Endothelial cell of umbilical vein (primary cell): ENCODE measurements at regions of chr3 and their contacts with region 1.

Region 1: DNA sequence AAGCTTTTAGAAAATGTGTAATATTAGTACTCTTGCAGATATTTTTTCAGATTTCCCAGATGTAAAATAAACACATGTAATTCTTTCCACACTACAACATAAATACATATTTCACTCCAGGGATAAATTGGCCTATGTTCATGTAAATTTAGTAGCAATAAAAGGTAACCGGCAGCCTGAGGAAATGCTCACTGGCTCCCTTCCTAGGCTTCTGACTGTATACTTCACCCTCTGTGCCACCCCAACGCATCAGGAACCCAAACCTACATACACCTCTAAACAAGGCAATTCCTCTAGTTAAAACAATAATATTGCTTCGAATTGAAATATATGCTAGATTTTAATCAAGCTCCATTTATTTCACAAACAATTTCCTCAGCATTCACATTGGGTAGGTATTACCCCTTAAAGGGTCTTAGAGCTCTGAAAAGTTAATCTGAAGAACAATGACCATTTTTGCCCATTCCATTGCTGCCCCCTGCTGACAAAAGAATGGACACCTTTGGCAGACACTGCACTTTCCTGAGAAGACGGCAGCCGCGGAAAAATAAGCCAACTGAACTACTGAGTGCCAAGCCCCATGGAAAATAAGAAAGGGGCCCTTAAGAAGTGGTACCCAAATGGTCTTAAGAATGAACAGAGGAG is 212.5 kb downstream of the OSBPL10 start:
- DNase-seq: peak; percentile 76
- H3K4me3 ChIP-seq: no peak overlapping the region
- H3K27ac ChIP-seq: no peak overlapping the region
- H3K4me1 ChIP-seq: no peaks in the 10 kb centered on the region
- H3K27me3 ChIP-seq: no peaks in the 10 kb centered on the region
- CTCF ChIP-seq: peak; percentile 43 to 58
- POLR2A ChIP-seq: no peak

Region 2: DNA sequence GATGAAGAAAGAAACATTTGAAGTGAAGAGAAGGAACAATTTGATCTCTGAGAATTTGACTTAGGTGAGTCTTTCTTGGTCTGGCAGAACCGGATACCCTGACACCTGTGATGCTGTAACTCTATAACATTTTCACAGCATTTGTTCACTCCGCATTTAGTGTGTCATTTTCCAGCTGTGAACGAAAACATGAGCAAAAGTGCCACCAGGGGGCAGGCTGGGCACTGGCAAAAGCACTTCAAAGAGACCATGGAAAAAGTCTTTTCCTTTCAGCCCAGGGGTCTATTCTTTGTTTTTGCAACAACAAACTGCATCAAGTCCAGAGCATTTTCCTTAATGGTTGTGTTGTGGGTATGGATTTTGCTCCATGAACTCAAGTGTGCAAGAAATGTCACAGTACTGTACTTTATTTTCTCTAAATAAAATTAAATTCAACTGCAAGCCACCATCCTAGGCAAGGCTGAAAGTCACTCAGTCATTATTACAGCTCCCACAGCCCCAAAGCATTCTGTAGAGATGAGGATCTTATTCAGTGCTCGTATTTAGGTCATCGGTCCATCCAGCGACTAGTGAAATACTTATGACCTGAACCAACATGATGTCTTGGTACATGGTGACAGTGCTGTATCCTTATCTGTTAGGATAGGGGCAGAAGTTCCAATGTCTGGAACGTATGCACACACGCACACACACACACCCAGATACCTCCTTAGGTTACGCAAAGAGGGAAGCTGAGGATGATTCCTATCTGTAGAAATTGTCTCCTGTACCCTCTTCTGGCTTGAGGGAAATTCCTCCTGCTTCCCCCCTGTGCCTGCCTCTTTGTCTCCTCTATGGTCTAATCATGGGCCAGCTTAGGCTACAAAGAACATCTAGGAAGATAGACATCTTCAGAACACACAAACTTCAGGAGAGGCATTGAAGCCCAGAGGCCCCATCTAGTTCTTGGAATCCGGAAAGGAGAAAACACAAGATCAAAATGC is 999.6 kb before region 1 on chr3:
- CTCF ChIA-PET with region 1: interaction called, 6 read pairs
- POLR2A ChIA-PET with region 1: no interaction called
- dilution Hi-C with region 1: no loop called
- intact Hi-C with region 1: loop called (anchors 5 kb)
- DNase-seq: peak; percentile 70
- H3K4me3 ChIP-seq: no peak overlapping the region
- H3K27ac ChIP-seq: no peak overlapping the region
- H3K4me1 ChIP-seq: no peaks in the 10 kb centered on the region
- H3K27me3 ChIP-seq: peaks cover 0 to 3% of the 10 kb centered on the region in 2 experiments
- CTCF ChIP-seq: peak; percentile 80 to 85
- POLR2A ChIP-seq: no peak

Region 3: GRCh38 chr3:31550452-31551251 is 217.9 kb before region 1 on chr3:
- CTCF ChIA-PET with region 1: interaction called, 21 read pairs
- POLR2A ChIA-PET with region 1: no interaction called
- dilution Hi-C with region 1: no loop called
- intact Hi-C with region 1: loop called (anchors 1 kb)
- DNase-seq: peak; percentile 60
- H3K4me3 ChIP-seq: no peak overlapping the region
- H3K27ac ChIP-seq: no peak overlapping the region
- H3K4me1 ChIP-seq: no peaks in the 10 kb centered on the region
- H3K27me3 ChIP-seq: no peaks in the 10 kb centered on the region
- CTCF ChIP-seq: peak; percentile 42 to 57
- POLR2A ChIP-seq: no peak

Region 4: DNA sequence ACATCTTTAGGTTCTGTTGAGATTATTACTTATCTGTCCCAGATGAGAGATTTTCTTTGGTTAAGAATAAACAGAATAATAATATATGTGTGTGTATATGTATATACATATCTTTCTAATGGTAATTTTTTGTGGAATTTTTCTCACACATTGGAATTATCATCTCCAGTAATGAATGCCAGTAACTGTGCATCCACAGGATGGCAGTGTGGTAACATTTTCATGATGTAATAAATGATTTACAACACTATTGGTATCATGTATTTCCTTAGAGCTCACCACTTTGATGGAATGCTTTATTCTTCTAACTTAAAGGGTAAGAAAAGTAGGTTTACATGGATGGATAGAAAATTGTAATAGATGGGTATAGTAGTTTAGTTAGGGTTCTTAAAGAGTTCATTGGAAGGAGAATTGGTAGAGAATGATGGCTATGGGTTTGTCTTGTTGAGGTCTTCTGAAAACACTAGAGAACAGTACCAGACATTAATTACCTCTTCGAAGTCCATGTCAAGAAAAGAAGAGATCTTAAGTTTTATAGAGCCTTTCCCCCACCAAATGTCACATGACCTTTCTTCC is 157.8 kb before region 1 on chr3:
- CTCF ChIA-PET with region 1: interaction called, 37 read pairs
- POLR2A ChIA-PET with region 1: interaction called, 3 read pairs
- dilution Hi-C with region 1: no loop called
- intact Hi-C with region 1: loop called (anchors 1 kb)
- DNase-seq: peak; percentile 70
- H3K4me3 ChIP-seq: no peak overlapping the region
- H3K27ac ChIP-seq: no peak overlapping the region
- H3K4me1 ChIP-seq: no peaks in the 10 kb centered on the region
- H3K27me3 ChIP-seq: no peaks in the 10 kb centered on the region
- CTCF ChIP-seq: peak; percentile 31 to 40
- POLR2A ChIP-seq: no peak

Region 5: GRCh38 chr3:31752722-31753423 is 15.7 kb before region 1 on chr3:
- CTCF ChIA-PET with region 1: interaction called, 10 read pairs
- POLR2A ChIA-PET with region 1: no interaction called
- dilution Hi-C with region 1: no loop called
- intact Hi-C with region 1: no loop called
- DNase-seq: no peak
- H3K4me3 ChIP-seq: no peak overlapping the region
- H3K27ac ChIP-seq: no peak overlapping the region
- H3K4me1 ChIP-seq: no peaks in the 10 kb centered on the region
- H3K27me3 ChIP-seq: no peaks in the 10 kb centered on the region
- CTCF ChIP-seq: no peak
- POLR2A ChIP-seq: no peak

Region 6: GRCh38 chr3:31804240-31805051 is 35.8 kb after region 1 on chr3:
- CTCF ChIA-PET with region 1: no interaction called
- POLR2A ChIA-PET with region 1: no interaction called
- dilution Hi-C with region 1: no loop called
- intact Hi-C with region 1: no loop called
- DNase-seq: no peak
- H3K4me3 ChIP-seq: no peak overlapping the region
- H3K27ac ChIP-seq: no peak overlapping the region
- H3K4me1 ChIP-seq: no peaks in the 10 kb centered on the region
- H3K27me3 ChIP-seq: no peaks in the 10 kb centered on the region
- CTCF ChIP-seq: no peak
- POLR2A ChIP-seq: no peak

Region 7: DNA sequence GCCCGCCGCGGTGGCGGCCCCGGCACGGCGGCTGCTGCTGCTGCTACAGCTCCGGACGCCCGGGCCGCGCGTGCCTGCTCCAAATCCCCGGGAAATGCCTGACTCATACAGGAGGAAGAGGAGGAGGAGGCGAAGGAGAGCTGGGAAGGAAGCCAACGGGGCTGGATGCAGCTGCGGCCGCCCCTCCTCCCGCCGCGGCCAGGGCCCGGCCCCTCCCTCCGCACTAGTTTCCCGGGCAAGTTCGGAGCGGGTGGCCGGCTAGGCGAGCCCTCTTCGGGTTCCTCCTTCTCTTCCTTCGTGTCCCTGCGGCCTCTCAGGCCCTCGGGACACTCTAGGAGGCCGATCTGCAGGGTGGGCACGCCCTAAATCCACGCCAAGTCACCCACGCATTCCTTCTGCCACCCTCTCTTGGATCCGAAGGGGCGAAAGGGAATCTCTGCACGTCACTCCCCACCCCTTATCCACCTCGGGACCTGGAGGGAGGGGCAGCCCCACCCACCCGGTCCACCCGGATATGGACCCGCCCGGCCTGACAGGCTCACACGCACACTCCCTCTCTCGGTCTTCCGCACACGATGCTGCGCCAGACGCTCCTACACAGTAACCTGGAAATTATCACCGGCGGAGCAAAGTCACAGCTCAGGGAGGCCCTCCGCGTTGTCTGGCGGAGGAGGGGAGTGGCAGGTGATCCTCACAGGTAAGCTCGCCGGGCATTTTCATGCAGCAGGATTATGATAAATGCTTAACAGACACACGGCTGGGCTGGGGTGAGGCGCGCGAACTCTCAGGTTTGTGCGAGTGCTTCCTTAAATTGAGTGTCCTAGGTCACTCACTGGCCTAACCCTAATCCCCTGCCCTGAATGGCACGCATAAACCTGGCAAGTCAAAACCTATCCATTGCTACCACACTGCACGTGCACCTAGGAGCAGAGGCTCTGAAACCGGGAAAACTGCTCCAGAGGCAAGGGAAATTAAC is 212.9 kb after region 1 on chr3 and contains the starts of genes OSBPL10 and ZNF860:
- CTCF ChIA-PET with region 1: no interaction called
- POLR2A ChIA-PET with region 1: no interaction called
- dilution Hi-C with region 1: no loop called
- intact Hi-C with region 1: loop called (anchors 2 kb)
- DNase-seq: peak; percentile 95
- H3K4me3 ChIP-seq: peak within 1 kb of the TSS; percentile 50 to 94 (median 57)
- H3K27ac ChIP-seq: peak within 1 kb of the TSS; percentile 71
- H3K4me1 ChIP-seq: peaks cover 17% of the 10 kb centered on the region
- H3K27me3 ChIP-seq: no peaks in the 10 kb centered on the region
- CTCF ChIP-seq: no peak
- POLR2A ChIP-seq: peak; percentile 12
- total RNA-seq, gene OSBPL10: 37.1 and 47.6 TPM in 2 replicates
- total RNA-seq, gene ZNF860: 0.73 and 1.0 TPM in 2 replicates